Activated T-helper 2 cell treated with anti-CD3 and anti-CD28 coated beads, Interferon-gamma antibody, Interleukin-2, Interleukin-4, amounts not matched to agents 10 μg/mL and 5 μg/mL and 100 μg/mL, durations not matched to agents 14 hours and 24 hours and 36 hours (primary cell): ENCODE measurements at regions of chrX and their contacts with region 1.

Region 1: DNA sequence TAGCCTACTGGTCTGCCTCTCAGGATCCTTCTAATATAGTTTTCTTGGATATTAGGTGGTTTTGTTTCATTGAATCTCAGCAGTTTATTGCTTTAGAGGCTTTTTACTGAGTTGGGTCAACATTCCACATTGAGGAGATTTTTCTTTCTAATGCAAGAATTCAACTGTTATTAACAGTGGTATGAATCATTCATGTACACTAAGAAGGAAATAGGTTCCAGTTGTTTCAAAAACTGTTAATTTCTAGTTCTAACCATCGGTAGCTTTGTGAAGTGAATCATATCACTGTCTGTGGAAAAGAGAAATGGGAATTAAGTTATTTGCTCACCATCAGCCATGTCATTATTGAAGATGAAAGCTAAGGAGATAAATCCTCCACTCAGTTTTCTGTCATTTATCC is 331.5 kb downstream of the RPA4 start:
- DNase-seq: no peak
- H3K4me3 Mint-ChIP-seq: no peak overlapping the region
- H3K27ac Mint-ChIP-seq: no peak overlapping the region
- H3K4me1 Mint-ChIP-seq: peaks cover 1% of the 10 kb centered on the region
- H3K27me3 Mint-ChIP-seq: no peaks in the 10 kb centered on the region

Region 2: GRCh38 chrX:97045470-97045869 is 169.7 kb before region 1 on chrX:
- intact Hi-C with region 1: loop called (anchors 5 kb)
- DNase-seq: no peak
- H3K4me3 Mint-ChIP-seq: no peak overlapping the region
- H3K27ac Mint-ChIP-seq: no peak overlapping the region
- H3K4me1 Mint-ChIP-seq: peaks cover 9% of the 10 kb centered on the region
- H3K27me3 Mint-ChIP-seq: no peaks in the 10 kb centered on the region

Region 3: DNA sequence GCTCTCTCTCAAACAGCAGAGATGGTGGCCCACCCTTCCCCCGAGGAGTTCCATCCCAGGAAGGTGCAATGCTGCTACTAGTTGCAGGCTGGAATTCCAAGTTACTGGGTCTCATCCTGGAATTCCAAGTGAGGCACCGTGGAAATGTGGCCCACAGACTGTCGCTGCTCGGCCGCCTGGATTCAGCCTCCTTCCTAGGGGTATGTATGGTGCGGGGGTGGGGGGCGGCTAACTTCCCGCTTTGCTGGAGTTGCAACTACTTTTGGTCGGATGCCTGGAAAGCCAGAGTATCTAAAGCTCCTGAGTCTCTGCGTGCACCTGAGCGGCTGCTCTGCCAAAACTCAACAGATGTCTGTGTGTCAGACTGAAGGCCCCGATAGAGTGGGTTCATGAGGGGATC is 814.7 kb after region 1 on chrX:
- intact Hi-C with region 1: no loop called
- DNase-seq: no peak
- H3K4me3 Mint-ChIP-seq: no peak overlapping the region
- H3K27ac Mint-ChIP-seq: no peak overlapping the region
- H3K4me1 Mint-ChIP-seq: no peaks in the 10 kb centered on the region
- H3K27me3 Mint-ChIP-seq: no peaks in the 10 kb centered on the region